K562 (cell line): ENCODE measurements at regions of chr20 and their contacts with region 1.

Region 1: GRCh38 chr20:52127309-52127708 is 64.3 kb downstream of the ZFP64 start:
- DNase-seq: no peak
- ATAC-seq: no peak
- H3K4me3 ChIP-seq: no peak overlapping the region
- H3K27ac ChIP-seq: no peak overlapping the region
- H3K4me1 ChIP-seq: no peaks in the 10 kb centered on the region
- H3K27me3 ChIP-seq: peaks cover 0 to 6% of the 10 kb centered on the region in 2 experiments; a peak in 2 of 5 replicates
- CTCF ChIP-seq: no peak
- EP300 ChIP-seq: no peak
- POLR2A ChIP-seq: no peak
- RAD21 ChIP-seq: no peak

Region 2: DNA sequence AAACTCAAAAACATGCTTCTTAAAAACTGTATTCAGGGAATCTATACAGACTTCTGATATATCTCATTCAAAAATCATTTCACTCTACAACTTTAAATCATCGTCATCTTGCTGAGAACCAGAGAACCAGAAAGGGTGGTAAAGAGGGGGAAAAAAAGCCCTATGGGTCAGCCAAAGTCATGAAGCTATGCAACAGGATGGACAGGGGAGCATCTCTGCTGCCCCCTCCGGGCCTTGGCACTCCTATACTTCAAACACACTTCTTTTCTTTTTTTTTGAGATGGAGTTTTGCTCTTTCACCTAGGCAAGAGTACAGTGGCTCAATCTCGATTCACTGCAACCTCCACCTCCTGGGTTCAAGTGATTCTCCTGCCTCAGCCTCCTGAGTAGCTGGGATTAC is 511.2 kb before region 1 on chr20:
- CTCF ChIA-PET with region 1: no interaction called
- POLR2A ChIA-PET with region 1: no interaction called
- in situ Hi-C with region 1: no loop called
- intact Hi-C with region 1: no loop called
- DNase-seq: no peak
- ATAC-seq: peak; percentile 46; the same call in 2 of the 3 replicates
- H3K4me3 ChIP-seq: no peak overlapping the region
- H3K27ac ChIP-seq: no peak overlapping the region
- H3K4me1 ChIP-seq: peaks cover 11 to 12% of the 10 kb centered on the region in 2 experiments; a peak in 4 of 5 replicates
- H3K27me3 ChIP-seq: peaks cover 15 to 22% of the 10 kb centered on the region in 2 experiments
- CTCF ChIP-seq: peak in 2 of 3 experiments; percentile 21 to 26; a peak in 3 of 6 replicates
- EP300 ChIP-seq: no peak
- POLR2A ChIP-seq: no peak
- RAD21 ChIP-seq: 0 out of 4 replicates have a peak, but pooled peaks of 1 of the 2 experiments have one; percentile 12

Region 3: DNA sequence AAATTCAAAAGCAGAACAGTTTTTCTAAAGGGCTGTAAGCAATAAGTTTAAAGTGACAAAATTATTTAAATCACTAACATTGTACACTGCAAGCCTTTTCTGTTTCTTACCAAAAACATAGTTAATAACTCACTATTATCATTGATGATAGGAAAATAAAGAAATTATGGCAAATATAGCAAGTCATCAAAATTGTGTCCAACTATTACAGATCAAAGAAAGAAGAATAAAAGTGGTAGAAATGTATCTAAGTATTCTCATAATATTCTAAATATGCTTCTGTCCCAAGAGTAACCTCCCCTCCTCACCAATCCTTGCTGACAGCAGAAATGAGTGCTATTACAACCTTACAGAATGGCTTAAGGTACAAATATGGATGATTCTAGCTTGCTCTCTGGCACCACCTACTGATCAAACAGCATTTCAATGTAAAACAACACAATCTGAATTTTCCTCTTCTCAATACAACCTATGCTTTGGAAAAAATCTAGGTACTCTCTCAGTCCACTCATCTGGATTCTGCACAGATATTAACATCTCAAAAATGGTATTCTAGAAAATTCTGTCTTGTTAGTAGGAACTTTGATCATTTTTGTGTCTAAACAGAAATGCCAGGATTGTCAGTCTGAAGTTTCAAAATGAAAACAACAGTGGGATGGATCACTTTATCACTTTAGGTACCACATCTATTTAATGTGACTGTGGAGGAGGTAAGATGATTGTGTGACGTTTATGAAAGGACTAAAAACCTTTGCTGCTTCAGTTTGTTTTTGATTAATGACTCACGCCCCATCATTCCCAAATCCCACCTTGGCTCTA is 23.3 kb after region 1 on chr20:
- CTCF ChIA-PET with region 1: no interaction called
- POLR2A ChIA-PET with region 1: no interaction called
- in situ Hi-C with region 1: no loop called
- intact Hi-C with region 1: loop called (anchors 1 kb)
- DNase-seq: peak; percentile 37 to 55 (median 39)
- ATAC-seq: peak; percentile 75
- H3K4me3 ChIP-seq: no peak overlapping the region
- H3K27ac ChIP-seq: no peak overlapping the region
- H3K4me1 ChIP-seq: no peaks in the 10 kb centered on the region; a peak in 1 of 5 replicates
- H3K27me3 ChIP-seq: no peaks in the 10 kb centered on the region
- CTCF ChIP-seq: peak; percentile 50 to 71 (median 67); a peak in 5 of 6 replicates
- EP300 ChIP-seq: no peak
- POLR2A ChIP-seq: no peak
- RAD21 ChIP-seq: peak; percentile 58 to 62

Region 4: GRCh38 chr20:52179331-52180179 is 52.2 kb after region 1 on chr20:
- CTCF ChIA-PET with region 1: no interaction called
- POLR2A ChIA-PET with region 1: no interaction called
- in situ Hi-C with region 1: no loop called
- intact Hi-C with region 1: no loop called
- DNase-seq: no peak
- ATAC-seq: no peak
- H3K4me3 ChIP-seq: no peak overlapping the region
- H3K27ac ChIP-seq: no peak overlapping the region
- H3K4me1 ChIP-seq: no peaks in the 10 kb centered on the region
- H3K27me3 ChIP-seq: no peaks in the 10 kb centered on the region
- CTCF ChIP-seq: no peak
- EP300 ChIP-seq: no peak
- POLR2A ChIP-seq: no peak
- RAD21 ChIP-seq: no peak

Region 5: DNA sequence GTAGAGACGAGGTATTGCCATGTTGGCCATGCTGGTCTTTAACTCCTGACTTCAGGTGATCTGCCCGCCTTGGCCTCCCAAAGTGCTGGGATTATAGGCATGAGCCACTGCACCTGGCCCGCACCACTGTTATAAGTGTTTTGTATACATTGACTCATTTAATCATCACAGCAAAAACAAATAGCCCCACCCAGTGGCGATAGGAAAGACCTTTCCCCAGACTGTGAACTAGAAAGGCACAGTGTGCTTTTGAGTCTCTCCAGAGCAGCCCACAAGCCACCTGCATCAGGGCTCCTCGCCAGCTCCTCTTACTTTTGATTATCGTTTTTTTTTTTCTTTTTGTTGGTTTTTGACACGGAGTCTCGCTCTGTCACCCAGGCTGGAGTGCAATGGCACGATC is 92.1 kb after region 1 on chr20:
- CTCF ChIA-PET with region 1: no interaction called
- POLR2A ChIA-PET with region 1: no interaction called
- in situ Hi-C with region 1: no loop called
- intact Hi-C with region 1: loop called (anchors 10 kb)
- DNase-seq: no peak
- ATAC-seq: no peak
- H3K4me3 ChIP-seq: no peak overlapping the region
- H3K27ac ChIP-seq: no peak overlapping the region
- H3K4me1 ChIP-seq: no peaks in the 10 kb centered on the region
- H3K27me3 ChIP-seq: no peaks in the 10 kb centered on the region
- CTCF ChIP-seq: peak in 1 of 3 experiments; percentile 26; a peak in 1 of 6 replicates
- EP300 ChIP-seq: no peak
- POLR2A ChIP-seq: no peak
- RAD21 ChIP-seq: 0 out of 4 replicates have a peak, but pooled peaks of 1 of the 2 experiments have one; percentile 11

Region 6: GRCh38 chr20:52379723-52380336 is 252.5 kb after region 1 on chr20:
- CTCF ChIA-PET with region 1: no interaction called
- POLR2A ChIA-PET with region 1: no interaction called
- in situ Hi-C with region 1: no loop called
- intact Hi-C with region 1: loop called (anchors 1 kb)
- DNase-seq: peak; percentile 27 to 53 (median 38)
- ATAC-seq: no peak
- H3K4me3 ChIP-seq: no peak overlapping the region
- H3K27ac ChIP-seq: no peak overlapping the region
- H3K4me1 ChIP-seq: no peaks in the 10 kb centered on the region
- H3K27me3 ChIP-seq: no peaks in the 10 kb centered on the region
- CTCF ChIP-seq: peak; percentile 68 to 80 (median 77)
- EP300 ChIP-seq: no peak
- POLR2A ChIP-seq: no peak
- RAD21 ChIP-seq: peak; percentile 41 to 64